Activated T-helper 1 cell treated with anti-CD3 and anti-CD28 coated beads, Interleukin-12 subunit alpha, Interleukin-12 subunit beta, Interleukin-2, Interleukin-4 antibody, amounts not matched to agents 30 ng/mL and 10 ng/mL and 1 ng/mL, durations not matched to agents 14 hours and 24 hours and 36 hours (primary cell): ENCODE measurements at regions of chr6 and their contacts with region 1.

Region 1: DNA sequence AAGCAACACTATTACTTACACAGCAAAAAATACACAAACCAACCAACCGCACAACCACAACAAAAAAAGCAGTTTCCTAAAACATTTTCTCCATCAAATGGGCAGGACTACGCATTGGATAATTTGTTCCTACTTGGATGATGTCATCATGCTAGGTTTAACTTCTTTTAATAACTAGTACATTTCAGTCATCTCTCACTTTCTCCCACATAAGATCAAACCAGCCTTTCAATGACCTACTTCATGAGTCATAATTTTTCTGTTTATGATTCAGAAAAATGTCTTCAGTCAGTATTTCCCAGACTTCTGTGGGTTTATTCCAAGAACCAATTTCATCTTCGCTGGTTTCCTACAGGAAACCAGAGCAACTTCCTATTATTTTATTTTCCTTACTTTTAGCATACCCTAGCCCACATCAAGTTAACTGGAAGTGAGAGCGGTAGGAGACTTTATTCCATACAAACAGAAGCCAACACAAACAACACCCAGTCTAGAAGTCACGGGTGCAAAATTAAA is 134.2 kb downstream of the GMDS start:
- DNase-seq: no peak
- H3K4me3 Mint-ChIP-seq: peak overlapping the region; percentile 73
- H3K27ac Mint-ChIP-seq: peak overlapping the region; percentile 90
- H3K4me1 Mint-ChIP-seq: peaks cover 50% of the 10 kb centered on the region
- H3K27me3 Mint-ChIP-seq: peaks cover 2% of the 10 kb centered on the region

Region 2: DNA sequence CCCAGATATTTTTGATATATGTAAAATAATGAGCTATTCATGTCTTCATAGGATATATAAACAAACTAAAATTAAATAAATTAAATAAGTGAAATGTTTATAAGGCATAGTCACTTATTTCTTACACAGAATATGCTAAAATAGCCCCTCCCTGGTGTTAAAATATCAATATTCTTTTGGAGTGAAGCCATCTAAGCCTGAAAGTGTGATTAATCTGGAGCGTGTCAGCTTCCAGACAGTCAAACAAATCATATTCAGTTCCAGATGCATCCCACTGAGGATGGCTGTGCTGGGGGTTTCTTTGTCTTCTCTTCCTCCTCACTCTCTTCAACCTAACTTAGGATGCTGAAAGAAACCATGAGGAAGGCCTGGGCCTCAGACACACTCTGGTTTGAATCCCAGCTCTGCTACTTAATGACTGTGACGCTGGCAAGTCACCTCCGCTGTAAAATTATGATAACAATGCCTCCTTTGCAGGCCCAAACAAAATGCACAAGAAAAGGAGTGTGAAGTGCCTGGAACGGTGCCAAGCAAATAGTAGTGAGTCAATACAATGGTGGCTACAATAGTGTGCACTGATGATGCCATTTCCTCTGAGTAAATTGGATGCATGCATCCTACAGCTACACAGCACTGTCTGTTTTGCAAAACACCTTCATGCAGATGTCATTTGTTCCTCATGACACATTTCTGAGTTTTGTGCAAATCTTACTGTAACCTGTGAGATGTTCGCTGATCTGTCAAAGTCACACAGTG is 340.1 kb before region 1 on chr6:
- intact Hi-C with region 1: loop called (anchors 2 kb)
- DNase-seq: no peak
- H3K4me3 Mint-ChIP-seq: no peak overlapping the region
- H3K27ac Mint-ChIP-seq: no peak overlapping the region
- H3K4me1 Mint-ChIP-seq: peaks cover 25% of the 10 kb centered on the region
- H3K27me3 Mint-ChIP-seq: no peaks in the 10 kb centered on the region

Region 3: GRCh38 chr6:2127484-2127911 is 16.3 kb after region 1 on chr6:
- intact Hi-C with region 1: loop called (anchors 1 kb)
- DNase-seq: peak; percentile 14
- H3K4me3 Mint-ChIP-seq: peak overlapping the region; percentile 32
- H3K27ac Mint-ChIP-seq: peak overlapping the region; percentile 76
- H3K4me1 Mint-ChIP-seq: peaks cover 35% of the 10 kb centered on the region
- H3K27me3 Mint-ChIP-seq: no peaks in the 10 kb centered on the region

Region 4: DNA sequence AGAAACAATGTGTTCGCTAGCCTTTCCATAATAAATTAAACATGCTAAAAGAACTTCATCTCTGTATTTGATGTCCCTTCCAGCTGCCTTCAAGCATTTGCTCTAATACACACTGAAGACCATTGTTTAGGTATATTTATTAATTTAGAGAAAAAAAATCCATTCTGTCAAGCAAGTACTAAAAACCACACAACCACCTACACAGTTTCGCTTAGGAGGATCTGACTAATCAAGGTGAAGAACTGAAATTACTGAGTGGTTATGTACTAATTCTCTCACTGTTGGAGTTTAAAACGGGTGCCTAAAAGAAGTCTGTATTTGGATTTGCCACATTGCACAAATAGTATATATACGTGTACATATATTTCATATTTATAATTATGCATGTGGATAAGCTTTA is 75.3 kb after region 1 on chr6:
- intact Hi-C with region 1: loop called (anchors 1 kb)
- DNase-seq: no peak
- H3K4me3 Mint-ChIP-seq: no peak overlapping the region
- H3K27ac Mint-ChIP-seq: peak overlapping the region; percentile 65
- H3K4me1 Mint-ChIP-seq: peaks cover 20% of the 10 kb centered on the region
- H3K27me3 Mint-ChIP-seq: peaks cover 6% of the 10 kb centered on the region

Region 5: DNA sequence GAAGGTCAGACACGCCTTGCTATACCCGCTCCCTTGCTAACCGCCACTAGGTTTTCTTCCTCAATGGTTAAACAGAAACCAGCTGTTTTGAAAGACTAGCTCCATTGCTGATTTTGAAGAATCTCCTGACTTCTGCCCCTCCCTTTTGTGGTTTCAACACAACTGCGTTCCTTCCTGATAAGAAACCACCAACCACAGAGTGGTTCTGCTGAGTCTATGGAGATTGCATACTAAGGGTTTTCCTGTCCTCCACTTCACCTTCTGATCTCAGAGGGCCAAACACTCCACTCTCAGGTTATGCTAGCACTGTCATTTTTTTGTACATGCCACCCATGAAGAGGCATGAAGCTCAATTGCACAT is 431.6 kb after region 1 on chr6:
- intact Hi-C with region 1: loop called (anchors 2 kb)
- DNase-seq: peak; percentile 78
- H3K4me3 Mint-ChIP-seq: peak overlapping the region; percentile 41
- H3K27ac Mint-ChIP-seq: peak overlapping the region; percentile 74
- H3K4me1 Mint-ChIP-seq: peaks cover 39% of the 10 kb centered on the region
- H3K27me3 Mint-ChIP-seq: peaks cover 66% of the 10 kb centered on the region